Mammary epithelial cell (primary cell): ENCODE measurements at regions of chr12 and their contacts with region 1.

Region 1: GRCh38 chr12:105420659-105421240 is 90.3 kb downstream of the C12orf75 start:
- DNase-seq: peak; percentile 63
- H3K4me3 ChIP-seq: no peak overlapping the region
- H3K27ac ChIP-seq: no peak overlapping the region
- H3K4me1 ChIP-seq: peaks cover 19% of the 10 kb centered on the region
- H3K27me3 ChIP-seq: no peaks in the 10 kb centered on the region
- CTCF ChIP-seq: peak; percentile 90 to 95

Region 2: GRCh38 chr12:105775343-105775742 is 354.6 kb after region 1 on chr12:
- CTCF ChIA-PET with region 1: no interaction called
- dilution Hi-C with region 1: no loop called
- in situ Hi-C with region 1: no loop called
- intact Hi-C with region 1: loop called (anchors 5 kb)
- DNase-seq: peak; percentile 43
- H3K4me3 ChIP-seq: no peak overlapping the region
- H3K27ac ChIP-seq: no peak overlapping the region
- H3K4me1 ChIP-seq: no peaks in the 10 kb centered on the region
- H3K27me3 ChIP-seq: no peaks in the 10 kb centered on the region
- CTCF ChIP-seq: peak in 1 of 2 donors; percentile 48

Region 3: DNA sequence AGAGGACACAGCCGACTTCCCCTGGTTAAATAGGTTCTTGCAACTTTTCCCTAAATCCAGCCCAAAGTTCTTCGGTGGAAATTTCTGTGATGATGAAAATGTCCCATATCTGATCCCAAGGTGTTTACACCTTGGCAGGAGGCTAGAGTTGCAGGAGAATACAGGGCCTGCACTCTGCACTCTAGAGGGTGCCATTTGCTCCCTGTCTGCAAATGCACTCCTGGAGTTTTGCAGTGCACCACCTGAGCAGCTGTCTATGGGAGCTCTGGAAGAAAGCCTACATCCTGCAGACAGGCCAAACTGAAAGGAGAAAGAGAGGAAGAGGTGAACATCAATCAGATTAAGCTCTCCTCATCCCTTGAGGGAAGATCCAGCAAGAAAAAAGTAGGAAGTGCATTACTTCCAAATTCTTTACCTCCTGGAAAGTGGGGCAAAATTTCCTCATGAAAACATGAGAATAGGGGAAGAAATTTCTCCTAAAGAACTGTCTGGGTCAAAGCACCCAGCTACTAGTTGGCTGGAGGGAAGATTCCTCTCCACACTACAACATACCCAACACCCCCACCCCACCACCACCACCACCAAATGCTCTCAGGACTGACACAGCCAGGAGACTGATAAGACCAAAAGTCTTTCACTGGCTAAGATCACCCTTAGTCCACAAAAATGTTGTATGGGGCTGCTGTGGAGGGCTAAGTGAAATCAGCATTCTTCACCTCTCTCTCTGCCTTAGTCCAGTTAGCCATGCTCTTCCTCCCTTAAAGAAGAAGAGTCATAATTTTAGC is 611.6 kb after region 1 on chr12:
- CTCF ChIA-PET with region 1: no interaction called
- dilution Hi-C with region 1: no loop called
- in situ Hi-C with region 1: no loop called
- intact Hi-C with region 1: loop called (anchors 2 kb)
- DNase-seq: peak; percentile 7
- H3K4me3 ChIP-seq: no peak overlapping the region
- H3K27ac ChIP-seq: no peak overlapping the region
- H3K4me1 ChIP-seq: no peaks in the 10 kb centered on the region
- H3K27me3 ChIP-seq: no peaks in the 10 kb centered on the region
- CTCF ChIP-seq: peak in 1 of 2 donors; percentile 40

Region 4: DNA sequence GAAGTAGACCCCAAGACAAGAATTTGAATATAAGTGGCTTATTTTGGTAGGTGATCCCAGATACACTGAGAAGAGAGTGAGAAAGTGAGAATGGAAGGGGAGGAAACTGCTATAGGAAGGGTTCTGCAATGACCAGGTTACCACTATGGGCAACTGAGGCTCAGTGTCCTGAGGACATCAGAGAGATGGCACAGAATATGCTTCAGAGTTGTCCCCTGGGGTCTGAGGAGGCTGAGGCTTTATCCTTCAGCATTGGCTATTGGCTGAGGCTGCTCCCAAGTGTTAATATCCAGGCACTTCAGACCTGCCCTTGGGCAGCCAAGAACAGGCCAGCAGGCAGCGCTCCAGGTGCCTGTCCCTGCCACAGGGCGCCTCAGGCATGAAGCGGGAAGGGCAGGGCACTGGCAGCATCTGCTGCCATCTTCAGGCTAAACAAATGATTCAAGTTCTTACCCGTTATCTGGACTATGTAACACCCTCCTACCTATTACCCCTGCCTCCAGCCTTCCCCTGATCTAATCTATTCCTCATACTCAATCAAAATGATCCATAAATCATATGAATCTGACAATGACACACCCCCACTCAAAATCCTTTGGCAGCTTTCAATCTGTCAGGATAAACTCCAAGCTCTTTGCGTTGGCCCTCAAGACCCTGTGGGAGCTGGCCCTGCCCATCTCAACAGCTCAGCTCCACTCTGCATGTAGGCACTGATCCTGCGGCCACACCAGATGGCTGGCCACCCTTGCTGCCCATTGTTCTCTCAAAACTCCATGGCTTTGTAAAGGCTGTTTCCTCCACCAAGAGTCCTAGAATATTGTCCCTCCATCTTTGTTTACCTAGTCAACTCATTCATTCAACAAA is 784.7 kb after region 1 on chr12:
- CTCF ChIA-PET with region 1: no interaction called
- dilution Hi-C with region 1: no loop called
- in situ Hi-C with region 1: no loop called
- intact Hi-C with region 1: loop called (anchors 1 kb)
- DNase-seq: peak; percentile 44
- H3K4me3 ChIP-seq: no peak overlapping the region
- H3K27ac ChIP-seq: no peak overlapping the region
- H3K4me1 ChIP-seq: no peaks in the 10 kb centered on the region
- H3K27me3 ChIP-seq: no peaks in the 10 kb centered on the region
- CTCF ChIP-seq: peak in 1 of 2 donors; percentile 35

Region 5: DNA sequence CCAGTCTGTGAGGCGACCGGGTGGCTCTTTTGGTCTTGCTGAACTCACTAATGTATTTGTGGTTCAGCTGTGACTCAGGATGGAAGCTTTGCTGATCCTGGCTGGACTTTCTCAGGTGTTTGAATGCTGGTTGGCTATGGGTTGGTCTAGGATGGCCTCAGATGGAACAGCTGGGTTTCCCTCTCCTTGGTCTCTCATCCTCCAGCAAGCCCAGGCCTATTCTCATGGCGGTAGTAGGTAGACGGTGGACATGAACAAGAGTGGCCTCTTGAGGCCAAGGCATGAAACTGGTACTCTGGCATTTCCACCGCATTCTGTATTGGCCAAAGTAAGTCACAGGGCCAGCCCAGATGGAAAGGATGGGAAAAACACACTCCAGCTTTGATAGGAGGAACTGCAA is 925.0 kb after region 1 on chr12:
- CTCF ChIA-PET with region 1: no interaction called
- dilution Hi-C with region 1: no loop called
- in situ Hi-C with region 1: no loop called
- intact Hi-C with region 1: loop called (anchors 5 kb)
- DNase-seq: peak; percentile 96
- H3K4me3 ChIP-seq: no peak overlapping the region
- H3K27ac ChIP-seq: peak overlapping the region; percentile 2
- H3K4me1 ChIP-seq: peaks cover 13% of the 10 kb centered on the region
- H3K27me3 ChIP-seq: no peaks in the 10 kb centered on the region
- CTCF ChIP-seq: peak; percentile 59 to 68